ENCODE measurements at regions of chr16 and their contacts with region 1.

Region 1: GRCh38 chr16:9090960-9091866 is at the start of gene HAPSTR1:
- DNase-seq: peak; percentile 89 to 100 (median 99)
- ATAC-seq: peak; percentile 93
- H3K4me3 ChIP-seq: peak within 1 kb of the TSS; percentile 90
- H3K4me3 Mint-ChIP-seq: peak within 1 kb of the TSS; percentile 90 to 100 (median 98)
- H3K27ac ChIP-seq: peak within 1 kb of the TSS; percentile 98
- H3K27ac Mint-ChIP-seq: peak within 1 kb of the TSS; percentile 92 to 99 (median 97)
- H3K4me1 ChIP-seq: peaks cover 21 to 32% of the 10 kb centered on the region in 2 donors
- H3K4me1 Mint-ChIP-seq: peaks cover 29 to 40% (median 39%) of the 10 kb centered on the region in 7 donors
- H3K27me3 ChIP-seq: no peaks in the 10 kb centered on the region
- H3K27me3 Mint-ChIP-seq: peaks cover 0 to 4% (median 0%) of the 10 kb centered on the region in 5 donors
- total RNA-seq, gene HAPSTR1: 69.6 to 136 (median 87.3) TPM

Region 2: GRCh38 chr16:8674413-8675022 is 416.7 kb before region 1 on chr16 and contains the start of gene ABAT:
- CTCF ChIA-PET with region 1: no interaction called
- POLR2A ChIA-PET with region 1: interaction called, 4 read pairs
- intact Hi-C with region 1: loop called (anchors 2 to 5 kb)
- DNase-seq: peak; percentile 83 to 92 (median 87)
- ATAC-seq: peak; percentile 99
- H3K4me3 ChIP-seq: peak within 1 kb of the TSS; percentile 57
- H3K4me3 Mint-ChIP-seq: peak within 1 kb of the TSS; percentile 78 to 93 (median 88)
- H3K27ac ChIP-seq: peak within 1 kb of the TSS; percentile 70
- H3K27ac Mint-ChIP-seq: peak within 1 kb of the TSS; percentile 58 to 91 (median 78)
- H3K4me1 ChIP-seq: peaks cover 9 to 18% of the 10 kb centered on the region in 2 donors
- H3K4me1 Mint-ChIP-seq: peaks cover 6 to 22% (median 19%) of the 10 kb centered on the region in 7 donors
- H3K27me3 ChIP-seq: no peaks in the 10 kb centered on the region
- H3K27me3 Mint-ChIP-seq: peaks cover 0 to 7% (median 0%) of the 10 kb centered on the region in 5 donors
- total RNA-seq, gene ABAT: 5.4 to 11.5 (median 9.3) TPM

Region 3: GRCh38 chr16:8928467-8928957 is 162.7 kb before region 1 on chr16:
- CTCF ChIA-PET with region 1: no interaction called
- POLR2A ChIA-PET with region 1: no interaction called
- intact Hi-C with region 1: no loop called
- DNase-seq: no peak
- ATAC-seq: no peak
- H3K4me3 ChIP-seq: no peak overlapping the region
- H3K4me3 Mint-ChIP-seq: no peak overlapping the region
- H3K27ac ChIP-seq: no peak overlapping the region
- H3K27ac Mint-ChIP-seq: no peak overlapping the region
- H3K4me1 ChIP-seq: peaks cover 0 to 10% of the 10 kb centered on the region in 2 donors
- H3K4me1 Mint-ChIP-seq: peaks cover 23 to 68% (median 45%) of the 10 kb centered on the region in 7 donors
- H3K27me3 ChIP-seq: no peaks in the 10 kb centered on the region
- H3K27me3 Mint-ChIP-seq: no peaks in the 10 kb centered on the region

Region 4: GRCh38 chr16:8963825-8964441 is 127.3 kb before region 1 on chr16 and contains the start of gene USP7:
- CTCF ChIA-PET with region 1: no interaction called
- POLR2A ChIA-PET with region 1: interaction called, 17 read pairs
- intact Hi-C with region 1: loop called (anchors 1 kb)
- DNase-seq: peak; percentile 86 to 94 (median 92)
- ATAC-seq: peak; percentile 94
- H3K4me3 ChIP-seq: peak within 1 kb of the TSS; percentile 77
- H3K4me3 Mint-ChIP-seq: peak within 1 kb of the TSS; percentile 90 to 98 (median 95)
- H3K27ac ChIP-seq: peak within 1 kb of the TSS; percentile 85
- H3K27ac Mint-ChIP-seq: peak within 1 kb of the TSS; percentile 80 to 97 (median 92)
- H3K4me1 ChIP-seq: peaks cover 30 to 34% of the 10 kb centered on the region in 2 donors
- H3K4me1 Mint-ChIP-seq: peaks cover 35 to 42% (median 40%) of the 10 kb centered on the region in 7 donors
- H3K27me3 ChIP-seq: no peaks in the 10 kb centered on the region
- H3K27me3 Mint-ChIP-seq: peaks cover 0 to 18% (median 0%) of the 10 kb centered on the region in 5 donors
- total RNA-seq, gene USP7: 175 to 261 (median 178) TPM

Region 5: DNA sequence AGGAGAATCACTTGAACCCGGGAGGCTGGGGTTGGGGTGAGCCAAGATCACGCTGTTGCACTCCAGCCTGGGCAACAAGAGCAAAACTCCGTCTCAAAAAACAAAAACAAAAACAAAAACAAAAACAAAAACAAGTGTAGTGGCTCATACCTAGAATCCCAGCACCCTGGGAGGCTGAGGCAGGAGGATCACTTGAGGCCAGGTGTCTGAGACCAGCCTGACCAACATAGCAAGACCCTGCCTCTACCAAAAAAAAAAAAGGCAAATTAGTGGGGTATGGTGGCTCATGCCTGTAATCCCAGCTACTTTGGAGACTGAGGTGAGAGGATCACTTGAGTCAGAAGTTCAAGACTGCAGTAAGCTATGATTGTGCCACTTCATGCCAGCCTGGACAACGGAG is 26.1 kb before region 1 on chr16:
- CTCF ChIA-PET with region 1: no interaction called
- POLR2A ChIA-PET with region 1: no interaction called
- intact Hi-C with region 1: no loop called
- DNase-seq: no peak
- ATAC-seq: no peak
- H3K4me3 ChIP-seq: no peak overlapping the region
- H3K4me3 Mint-ChIP-seq: no peak overlapping the region
- H3K27ac ChIP-seq: no peak overlapping the region
- H3K27ac Mint-ChIP-seq: no peak overlapping the region
- H3K4me1 ChIP-seq: no peaks in the 10 kb centered on the region
- H3K4me1 Mint-ChIP-seq: peaks cover 0 to 12% (median 8%) of the 10 kb centered on the region in 7 donors
- H3K27me3 ChIP-seq: no peaks in the 10 kb centered on the region
- H3K27me3 Mint-ChIP-seq: peaks cover 0 to 4% (median 0%) of the 10 kb centered on the region in 5 donors

Region 6: DNA sequence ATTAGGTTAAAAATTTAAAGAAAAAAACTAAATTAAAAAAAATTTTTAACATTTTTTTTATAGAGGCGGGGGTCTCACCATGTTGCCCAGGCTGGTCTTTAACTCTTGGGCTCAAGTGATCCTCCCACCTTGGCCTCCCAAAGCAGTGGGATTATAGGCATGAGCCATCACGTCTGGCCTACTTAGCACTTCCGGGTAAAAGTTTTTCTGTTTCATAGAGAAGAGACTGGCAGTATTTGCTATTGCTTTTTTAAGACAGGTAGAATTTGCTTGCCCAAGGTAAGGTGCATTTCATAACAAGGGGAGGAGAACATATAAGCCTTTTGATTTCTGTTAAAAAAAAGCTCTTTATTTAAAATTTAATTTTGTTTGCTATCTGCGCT is 11.8 kb before region 1 on chr16:
- CTCF ChIA-PET with region 1: no interaction called
- POLR2A ChIA-PET with region 1: interaction called, 54 read pairs
- intact Hi-C with region 1: loop called (anchors 1 kb)
- DNase-seq: no peak
- ATAC-seq: no peak
- H3K4me3 ChIP-seq: no peak overlapping the region
- H3K4me3 Mint-ChIP-seq: no peak overlapping the region
- H3K27ac ChIP-seq: no peak overlapping the region
- H3K27ac Mint-ChIP-seq: peak overlapping the region in 3 of 9 donors; percentile 59 to 82 (median 79)
- H3K4me1 ChIP-seq: peaks cover 0 to 3% of the 10 kb centered on the region in 2 donors
- H3K4me1 Mint-ChIP-seq: peaks cover 9 to 33% (median 16%) of the 10 kb centered on the region in 7 donors
- H3K27me3 ChIP-seq: no peaks in the 10 kb centered on the region
- H3K27me3 Mint-ChIP-seq: peaks cover 0 to 5% (median 4%) of the 10 kb centered on the region in 5 donors

Region 7: DNA sequence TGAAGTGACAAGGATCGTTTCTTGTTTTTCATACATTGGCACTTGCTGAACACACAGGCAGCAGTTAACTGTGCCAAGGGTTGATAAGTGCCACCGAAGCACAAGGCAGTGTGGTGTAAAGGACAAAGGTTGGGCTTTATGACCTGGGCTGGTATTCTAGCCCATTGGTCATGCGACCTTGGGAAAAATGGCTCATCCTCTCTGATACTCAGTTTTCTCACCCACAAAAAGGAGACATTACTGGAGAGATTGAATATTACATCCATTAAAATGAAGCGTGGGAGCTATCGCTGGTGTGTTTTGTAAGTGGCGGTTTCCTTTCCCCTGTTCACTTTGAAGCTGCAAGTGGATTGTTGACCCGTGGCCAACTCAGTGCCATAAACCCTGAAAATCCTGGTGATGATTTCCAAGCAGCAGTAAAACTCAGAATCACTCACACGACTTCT is 217.2 kb after region 1 on chr16:
- CTCF ChIA-PET with region 1: no interaction called
- POLR2A ChIA-PET with region 1: no interaction called
- intact Hi-C with region 1: no loop called
- DNase-seq: no peak
- ATAC-seq: no peak
- H3K4me3 ChIP-seq: no peak overlapping the region
- H3K4me3 Mint-ChIP-seq: no peak overlapping the region
- H3K27ac ChIP-seq: no peak overlapping the region
- H3K27ac Mint-ChIP-seq: no peak overlapping the region
- H3K4me1 ChIP-seq: no peaks in the 10 kb centered on the region
- H3K4me1 Mint-ChIP-seq: no peaks in the 10 kb centered on the region
- H3K27me3 ChIP-seq: no peaks in the 10 kb centered on the region
- H3K27me3 Mint-ChIP-seq: peaks cover 0 to 23% (median 7%) of the 10 kb centered on the region in 5 donors

Region 8: DNA sequence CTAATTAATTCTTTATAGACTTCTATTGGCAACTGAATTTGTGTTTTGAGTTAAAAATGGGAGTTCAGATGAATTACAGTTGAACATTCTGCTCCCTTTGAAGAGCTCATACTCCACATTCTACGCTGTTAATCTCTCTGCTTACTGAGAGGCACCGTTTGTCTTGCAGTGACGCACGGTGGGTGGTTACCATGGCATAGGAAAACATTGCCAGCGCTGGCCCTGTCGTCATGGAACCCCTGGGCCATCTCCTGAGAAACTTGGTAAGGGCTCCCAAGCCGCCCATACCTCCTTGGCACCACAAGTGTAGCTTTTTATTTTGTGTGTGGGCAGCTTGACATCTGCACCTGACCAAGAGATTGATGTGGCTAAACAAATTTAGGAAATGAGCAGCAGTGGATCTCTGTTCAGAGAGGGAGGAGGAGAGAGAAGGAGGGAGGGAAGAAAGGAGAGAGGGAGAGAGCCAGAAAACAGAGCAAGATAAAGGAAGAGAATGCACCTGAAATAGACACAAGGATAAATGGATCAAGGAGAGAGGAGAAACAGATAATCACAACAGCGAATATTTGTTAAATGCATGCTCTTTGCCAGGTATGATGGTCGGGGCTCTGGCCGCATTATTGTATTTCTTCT is 398.7 kb after region 1 on chr16:
- CTCF ChIA-PET with region 1: no interaction called
- POLR2A ChIA-PET with region 1: no interaction called
- intact Hi-C with region 1: no loop called
- DNase-seq: no peak
- ATAC-seq: no peak
- H3K4me3 ChIP-seq: no peak overlapping the region
- H3K4me3 Mint-ChIP-seq: no peak overlapping the region
- H3K27ac ChIP-seq: no peak overlapping the region
- H3K27ac Mint-ChIP-seq: no peak overlapping the region
- H3K4me1 ChIP-seq: no peaks in the 10 kb centered on the region
- H3K4me1 Mint-ChIP-seq: no peaks in the 10 kb centered on the region
- H3K27me3 ChIP-seq: no peaks in the 10 kb centered on the region
- H3K27me3 Mint-ChIP-seq: peaks cover 0 to under 1% (median 0%) of the 10 kb centered on the region in 5 donors

Region 9: GRCh38 chr16:10385725-10386516 is 1294.7 kb after region 1 on chr16 and contains the start of gene ATF7IP2:
- CTCF ChIA-PET with region 1: no interaction called
- POLR2A ChIA-PET with region 1: no interaction called
- intact Hi-C with region 1: loop called in 1 of 2 experiments (anchors 10 kb)
- DNase-seq: peak; percentile 68 to 85 (median 83)
- ATAC-seq: peak; percentile 99
- H3K4me3 ChIP-seq: peak within 1 kb of the TSS; percentile 67
- H3K4me3 Mint-ChIP-seq: peak within 1 kb of the TSS; percentile 89 to 99 (median 98)
- H3K27ac ChIP-seq: peak within 1 kb of the TSS; percentile 84
- H3K27ac Mint-ChIP-seq: peak within 1 kb of the TSS; percentile 90 to 99 (median 97)
- H3K4me1 ChIP-seq: peaks cover 14 to 16% of the 10 kb centered on the region in 2 donors
- H3K4me1 Mint-ChIP-seq: peaks cover 31 to 52% (median 47%) of the 10 kb centered on the region in 7 donors
- H3K27me3 ChIP-seq: no peaks in the 10 kb centered on the region
- H3K27me3 Mint-ChIP-seq: peaks cover 0 to 3% (median 0%) of the 10 kb centered on the region in 5 donors
- total RNA-seq, gene ATF7IP2: 56.5 to 75.5 (median 67.1) TPM

Measured in naive thymus-derived CD4-positive, alpha-beta T cell (primary cell).